Lower leg skin (tissue), 4 donors: ENCODE measurements at regions of chr2 and their contacts with region 1.

Region 1: GRCh38 chr2:48233005-48233404 is 296.9 kb upstream of the STON1 start:
- DNase-seq: no peak
- H3K4me3 ChIP-seq: no peak overlapping the region
- CTCF ChIP-seq: no peak
- POLR2A ChIP-seq: no peak

Region 2: DNA sequence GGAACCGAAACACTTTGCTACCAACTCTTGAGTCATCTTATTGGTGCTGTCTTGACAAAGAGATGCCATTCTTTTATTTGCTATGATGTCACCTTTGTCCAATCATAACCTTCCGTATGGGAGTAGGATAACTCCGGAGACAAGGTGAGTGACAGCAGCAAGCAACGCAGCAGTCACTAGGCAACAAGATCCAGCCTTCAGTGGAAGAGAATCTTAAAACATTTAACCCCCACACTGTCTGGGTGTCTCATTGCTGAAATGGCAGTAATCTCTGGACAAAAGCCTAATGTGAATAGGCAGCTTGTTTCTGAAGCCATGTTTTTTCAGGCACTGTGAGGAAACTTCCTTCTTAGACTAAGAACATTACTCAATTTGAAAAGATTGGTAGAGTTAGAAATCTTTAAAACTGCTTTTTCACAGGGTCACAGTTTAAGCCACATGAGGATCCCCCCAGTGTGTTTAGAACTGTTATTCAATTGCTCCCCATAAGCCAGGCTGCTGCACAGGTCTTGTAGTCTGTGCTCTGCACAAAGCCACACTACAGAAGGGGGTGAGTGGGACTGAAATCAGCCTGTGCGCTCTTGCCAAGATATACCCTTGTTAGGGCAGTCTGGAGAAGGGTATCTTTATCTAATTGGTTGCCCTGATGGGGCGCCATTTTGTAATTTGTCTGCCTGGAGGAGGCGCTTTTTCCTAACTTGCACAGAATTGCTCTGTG is 165.4 kb after region 1 on chr2:
- intact Hi-C with region 1: loop called (anchors 10 kb)
- DNase-seq: no peak
- H3K4me3 ChIP-seq: no peak overlapping the region
- CTCF ChIP-seq: no peak
- POLR2A ChIP-seq: no peak